CD4-positive, alpha-beta T cell (primary cell): ENCODE measurements at regions of chr5 and their contacts with region 1.

Region 1: GRCh38 chr5:102778478-102778877 is 23.4 kb downstream of the PAM start:
- DNase-seq: no peak
- ATAC-seq: no peak
- H3K4me3 ChIP-seq: no peak overlapping the region
- H3K4me3 Mint-ChIP-seq: no peak overlapping the region
- H3K27ac ChIP-seq: no peak overlapping the region
- H3K27ac Mint-ChIP-seq: no peak overlapping the region
- H3K4me1 ChIP-seq: peaks cover 3% of the 10 kb centered on the region
- H3K4me1 Mint-ChIP-seq: peaks cover 32% of the 10 kb centered on the region
- H3K27me3 ChIP-seq: no peaks in the 10 kb centered on the region
- H3K27me3 Mint-ChIP-seq: no peaks in the 10 kb centered on the region
- CTCF ChIP-seq: no peak

Region 2: DNA sequence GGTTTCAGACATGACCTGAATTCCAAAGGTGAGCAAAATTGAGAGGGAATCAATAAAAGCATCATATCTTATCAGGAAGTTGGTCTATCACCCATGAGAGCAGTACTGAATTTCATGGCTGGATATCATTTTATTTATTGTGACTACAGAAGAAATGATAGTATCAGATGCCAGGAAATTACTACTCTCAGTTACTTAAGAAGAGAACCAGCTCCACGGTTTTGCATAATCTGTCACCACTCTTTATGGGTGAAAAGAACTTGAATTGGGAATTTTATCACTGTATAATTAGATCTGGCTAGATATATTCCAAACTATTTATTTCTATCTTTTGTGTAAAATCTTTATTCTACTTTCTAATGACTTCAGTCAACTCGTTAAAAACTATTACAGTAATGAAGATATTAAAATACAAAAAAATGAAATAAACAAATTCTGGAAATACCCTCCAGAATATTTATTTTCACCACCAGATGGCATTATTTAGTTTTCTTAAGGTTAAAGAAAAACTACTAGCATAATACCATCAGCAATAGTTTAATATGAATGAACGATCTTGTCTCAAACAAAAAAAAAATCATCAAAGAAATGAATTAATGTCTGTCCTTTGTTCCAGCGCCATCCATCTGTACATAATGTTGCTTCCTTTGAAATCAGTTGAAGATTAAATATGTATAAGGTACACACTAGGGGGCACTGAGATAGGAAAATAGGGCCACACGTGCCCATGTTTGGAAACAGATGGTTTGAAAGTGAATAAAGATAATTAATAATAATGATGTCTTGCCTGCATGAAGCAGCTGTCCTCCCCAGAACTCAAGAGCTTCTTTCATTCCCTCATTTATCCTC is 195.0 kb before region 1 on chr5:
- CTCF ChIA-PET with region 1: no interaction called
- POLR2A ChIA-PET with region 1: no interaction called
- intact Hi-C with region 1: loop called in 1 of 2 experiments (anchors 10 kb)
- DNase-seq: peak in 3 of 14 experiments; percentile 2 to 11 (median 9)
- ATAC-seq: no peak
- H3K4me3 ChIP-seq: no peak overlapping the region
- H3K4me3 Mint-ChIP-seq: no peak overlapping the region
- H3K27ac ChIP-seq: no peak overlapping the region
- H3K27ac Mint-ChIP-seq: no peak overlapping the region
- H3K4me1 ChIP-seq: no peaks in the 10 kb centered on the region
- H3K4me1 Mint-ChIP-seq: no peaks in the 10 kb centered on the region
- H3K27me3 ChIP-seq: no peaks in the 10 kb centered on the region
- H3K27me3 Mint-ChIP-seq: no peaks in the 10 kb centered on the region
- CTCF ChIP-seq: peak; percentile 55

Region 3: GRCh38 chr5:102971697-102972293 is 193.3 kb after region 1 on chr5:
- CTCF ChIA-PET with region 1: no interaction called
- POLR2A ChIA-PET with region 1: no interaction called
- intact Hi-C with region 1: loop called in 1 of 2 experiments (anchors 5 kb)
- DNase-seq: peak in 3 of 14 experiments; percentile 4 to 21 (median 15)
- ATAC-seq: no peak
- H3K4me3 ChIP-seq: no peak overlapping the region
- H3K4me3 Mint-ChIP-seq: no peak overlapping the region
- H3K27ac ChIP-seq: no peak overlapping the region
- H3K27ac Mint-ChIP-seq: no peak overlapping the region
- H3K4me1 ChIP-seq: no peaks in the 10 kb centered on the region
- H3K4me1 Mint-ChIP-seq: no peaks in the 10 kb centered on the region
- H3K27me3 ChIP-seq: no peaks in the 10 kb centered on the region
- H3K27me3 Mint-ChIP-seq: no peaks in the 10 kb centered on the region
- CTCF ChIP-seq: no peak